Colonic mucosa (tissue), 4 donors: ENCODE measurements at regions of chr6 and their contacts with region 1.

Region 1: DNA sequence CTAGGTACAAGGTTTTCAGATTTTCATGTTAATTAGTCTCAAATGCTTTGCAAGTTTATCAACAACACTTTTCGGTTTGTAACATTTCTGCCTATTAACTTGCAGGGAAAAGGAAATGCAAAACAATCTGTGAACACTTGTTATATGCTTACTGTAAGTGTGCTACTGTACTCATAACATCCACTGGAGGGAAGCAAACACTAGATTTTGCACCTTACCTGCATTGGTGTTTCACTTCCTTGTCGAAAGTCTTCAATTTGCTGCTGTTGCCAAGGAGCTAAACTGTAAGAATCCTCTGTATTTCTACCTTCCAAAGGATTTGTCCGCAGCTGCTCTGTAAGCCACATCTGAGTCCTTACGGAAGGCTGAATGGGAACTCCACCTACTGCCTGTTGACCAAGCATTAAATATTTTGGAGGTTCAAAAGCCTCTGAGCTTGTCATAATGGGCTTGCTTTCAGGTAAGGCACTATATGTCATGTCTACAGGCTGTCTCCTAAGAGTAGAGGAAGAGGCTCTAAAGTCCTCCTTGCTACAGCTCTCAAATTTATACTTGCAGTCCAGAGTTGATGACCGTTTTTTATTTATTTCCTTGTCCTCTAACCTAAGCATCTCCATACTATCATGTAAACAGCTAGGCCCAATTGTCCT is 17.3 kb downstream of the PLN start:
- DNase-seq: no peak
- H3K4me3 ChIP-seq: no peak overlapping the region
- H3K27ac ChIP-seq: no peak overlapping the region
- H3K4me1 ChIP-seq: no peaks in the 10 kb centered on the region
- H3K27me3 ChIP-seq: no peaks in the 10 kb centered on the region
- CTCF ChIP-seq: peak; percentile 39

Region 2: DNA sequence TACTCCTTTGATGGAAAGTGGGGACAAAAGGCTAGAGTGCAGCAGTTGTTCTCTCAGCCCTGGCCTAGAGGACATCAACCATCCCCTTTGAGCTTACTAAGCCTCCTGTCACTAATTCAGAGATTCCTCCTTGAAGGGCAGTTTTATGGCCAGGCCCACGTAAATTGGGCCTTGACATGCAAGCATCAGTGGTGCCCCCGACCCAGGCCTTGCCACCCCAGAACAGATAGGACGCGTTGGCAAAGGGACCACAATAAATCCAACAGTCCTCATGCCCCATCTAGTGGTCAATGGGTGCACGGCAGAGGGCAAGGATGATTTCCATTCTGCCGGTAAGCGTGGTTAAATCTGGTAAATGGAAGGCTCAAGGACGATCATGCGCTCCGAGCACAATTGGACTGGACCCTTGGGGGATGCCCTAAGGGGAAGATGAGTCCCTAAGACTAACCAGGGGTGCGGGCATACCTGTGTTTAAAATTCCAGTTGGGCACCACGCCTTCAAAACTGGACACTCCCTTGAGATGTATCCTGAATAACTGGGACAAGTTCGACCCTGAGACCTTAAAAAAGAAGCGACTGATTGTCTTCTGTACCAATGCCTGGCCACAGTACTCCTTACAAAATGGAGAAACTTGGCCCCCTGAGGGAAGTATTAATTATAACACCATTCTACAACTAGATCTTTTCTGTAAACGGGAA is 53.4 kb after region 1 on chr6:
- intact Hi-C with region 1: loop called (anchors 10 kb)
- DNase-seq: peak; percentile 60
- H3K4me3 ChIP-seq: no peak overlapping the region
- H3K27ac ChIP-seq: no peak overlapping the region
- H3K4me1 ChIP-seq: no peaks in the 10 kb centered on the region
- H3K27me3 ChIP-seq: no peaks in the 10 kb centered on the region
- CTCF ChIP-seq: peak; percentile 83